GM12878 (cell line): ENCODE measurements at regions of chr6 and their contacts with region 1.

Region 1: DNA sequence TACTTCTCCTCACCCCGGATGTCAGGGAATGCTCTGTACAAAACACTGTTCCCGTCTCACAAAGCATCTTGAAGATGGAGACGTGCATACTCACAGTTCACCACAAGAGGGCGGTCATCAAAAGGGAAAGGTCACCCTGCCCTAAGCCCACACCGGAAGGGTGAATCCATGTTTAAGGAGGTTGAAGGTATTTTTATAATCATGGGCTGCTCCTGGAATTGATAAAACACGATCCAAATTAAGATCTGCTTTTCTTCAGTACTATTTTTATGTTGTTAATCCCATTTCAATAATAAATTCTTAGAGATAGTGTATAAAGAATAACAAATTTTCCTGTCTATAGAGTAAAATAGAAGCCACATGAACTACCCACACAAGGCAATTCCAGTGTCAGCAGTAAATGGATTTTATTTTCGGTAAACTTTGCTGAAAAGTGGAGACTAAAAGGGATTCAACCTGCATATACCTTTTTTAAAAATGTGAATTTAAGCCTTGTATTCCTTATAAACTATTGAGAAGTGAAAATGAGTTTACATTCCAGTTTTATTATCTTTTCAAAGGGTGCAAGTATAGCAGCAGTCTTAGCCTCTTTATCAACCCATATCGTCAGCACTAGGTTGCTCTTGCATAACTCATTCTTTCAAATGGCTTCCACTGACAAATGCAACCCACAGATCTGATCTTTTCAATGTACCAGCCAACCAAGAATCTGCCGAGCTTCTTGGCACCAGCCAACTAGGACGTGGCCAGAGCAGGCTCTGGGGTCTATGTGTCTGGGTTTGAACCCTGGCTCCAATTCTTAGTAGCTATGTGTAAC is 79.7 kb upstream of the MBOAT1 start:
- DNase-seq: peak; percentile 52
- ATAC-seq: peak; percentile 92
- H3K4me3 ChIP-seq: no peak overlapping the region
- H3K27ac ChIP-seq: no peak overlapping the region
- H3K4me1 ChIP-seq: no peaks in the 10 kb centered on the region
- H3K27me3 ChIP-seq: no peaks in the 10 kb centered on the region
- CTCF ChIP-seq: peak; percentile 88 to 93 (median 90)
- EP300 ChIP-seq: no peak
- POLR2A ChIP-seq: no peak
- RAD21 ChIP-seq: peak; percentile 99

Region 2: DNA sequence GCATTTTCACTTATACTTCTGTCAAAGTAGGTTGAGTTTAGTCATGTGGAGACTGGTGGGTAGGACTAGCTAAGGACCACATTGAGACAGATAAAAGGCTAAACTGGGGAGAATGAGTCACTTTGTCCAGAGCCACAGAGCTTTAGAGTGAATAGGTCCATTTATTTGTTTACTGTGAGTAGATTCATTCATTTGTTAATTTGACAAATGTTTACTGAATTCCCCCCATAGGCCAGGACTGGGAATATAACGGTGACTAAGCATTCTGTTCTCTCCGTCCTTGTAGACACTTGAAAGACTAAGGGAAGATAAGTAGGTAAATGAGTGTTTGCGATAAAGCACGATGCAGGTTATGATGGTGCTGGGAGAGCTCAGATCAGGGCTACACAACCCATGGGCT is 1154.5 kb before region 1 on chr6:
- CTCF ChIA-PET with region 1: no interaction called
- POLR2A ChIA-PET with region 1: no interaction called
- RAD21 ChIA-PET with region 1: no interaction called
- SMC1A ChIA-PET with region 1: no interaction called
- in situ Hi-C with region 1: no loop called
- intact Hi-C with region 1: no loop called
- DNase-seq: no peak
- ATAC-seq: no peak
- H3K4me3 ChIP-seq: no peak overlapping the region
- H3K27ac ChIP-seq: no peak overlapping the region
- H3K4me1 ChIP-seq: no peaks in the 10 kb centered on the region
- H3K27me3 ChIP-seq: no peaks in the 10 kb centered on the region
- CTCF ChIP-seq: no peak
- EP300 ChIP-seq: no peak
- POLR2A ChIP-seq: no peak
- RAD21 ChIP-seq: no peak

Region 3: GRCh38 chr6:20252311-20252710 is 39.7 kb before region 1 on chr6:
- CTCF ChIA-PET with region 1: no interaction called
- POLR2A ChIA-PET with region 1: no interaction called
- RAD21 ChIA-PET with region 1: no interaction called
- SMC1A ChIA-PET with region 1: no interaction called
- in situ Hi-C with region 1: no loop called
- intact Hi-C with region 1: no loop called
- DNase-seq: no peak
- ATAC-seq: no peak
- H3K4me3 ChIP-seq: no peak overlapping the region
- H3K27ac ChIP-seq: no peak overlapping the region
- H3K4me1 ChIP-seq: no peaks in the 10 kb centered on the region
- H3K27me3 ChIP-seq: no peaks in the 10 kb centered on the region
- CTCF ChIP-seq: no peak
- EP300 ChIP-seq: no peak
- POLR2A ChIP-seq: no peak
- RAD21 ChIP-seq: no peak

Region 4: DNA sequence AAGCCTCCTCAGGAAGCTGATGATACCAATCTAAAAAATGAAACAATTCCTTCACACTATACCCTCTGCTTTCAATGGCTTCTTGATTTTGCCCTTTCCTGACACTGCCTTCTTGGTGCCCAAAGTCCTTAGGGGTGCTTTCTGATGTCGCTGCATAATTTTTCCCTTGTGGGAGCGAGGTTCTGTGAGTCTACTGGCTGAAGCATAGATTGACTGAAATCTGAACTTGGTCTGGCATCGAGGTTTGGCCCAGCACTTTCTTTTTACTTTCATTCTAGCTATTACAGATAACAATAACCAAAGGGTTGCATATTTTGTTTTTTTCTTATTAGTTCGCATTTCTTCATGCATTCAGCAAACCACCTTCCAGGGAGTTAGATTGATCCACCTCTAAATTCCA is 175.5 kb after region 1 on chr6:
- CTCF ChIA-PET with region 1: interaction called, 4 read pairs
- POLR2A ChIA-PET with region 1: no interaction called
- RAD21 ChIA-PET with region 1: no interaction called
- SMC1A ChIA-PET with region 1: interaction called, 3 read pairs
- in situ Hi-C with region 1: no loop called
- intact Hi-C with region 1: loop called (anchors 5 kb)
- DNase-seq: peak; percentile 50
- ATAC-seq: peak; percentile 63
- H3K4me3 ChIP-seq: no peak overlapping the region
- H3K27ac ChIP-seq: peak overlapping the region; percentile 50
- H3K4me1 ChIP-seq: peaks cover 46% of the 10 kb centered on the region
- H3K27me3 ChIP-seq: no peaks in the 10 kb centered on the region
- CTCF ChIP-seq: no peak
- EP300 ChIP-seq: no peak
- POLR2A ChIP-seq: no peak
- RAD21 ChIP-seq: no peak

Region 5: GRCh38 chr6:20534295-20535262 is 242.6 kb after region 1 on chr6 and contains the start of gene CDKAL1:
- CTCF ChIA-PET with region 1: interaction called, 28 read pairs
- POLR2A ChIA-PET with region 1: interaction called, 3 read pairs
- RAD21 ChIA-PET with region 1: interaction called, 3 read pairs
- SMC1A ChIA-PET with region 1: interaction called, 26 read pairs
- in situ Hi-C with region 1: loop called (anchors 5 kb)
- intact Hi-C with region 1: loop called (anchors 1 kb)
- DNase-seq: peak; percentile 91
- ATAC-seq: peak; percentile 89
- H3K4me3 ChIP-seq: peak within 1 kb of the TSS; percentile 93
- H3K27ac ChIP-seq: peak within 1 kb of the TSS; percentile 89
- H3K4me1 ChIP-seq: peaks cover 6% of the 10 kb centered on the region; the same call in 1 of the 2 replicates
- H3K27me3 ChIP-seq: no peaks in the 10 kb centered on the region
- CTCF ChIP-seq: no peak
- EP300 ChIP-seq: no peak
- POLR2A ChIP-seq: peak; percentile 87
- RAD21 ChIP-seq: no peak
- polyA plus RNA-seq, gene CDKAL1: 10.7 to 10.9 TPM